PC-9 (cell line): ENCODE measurements at regions of chr7 and their contacts with region 1.

Region 1: DNA sequence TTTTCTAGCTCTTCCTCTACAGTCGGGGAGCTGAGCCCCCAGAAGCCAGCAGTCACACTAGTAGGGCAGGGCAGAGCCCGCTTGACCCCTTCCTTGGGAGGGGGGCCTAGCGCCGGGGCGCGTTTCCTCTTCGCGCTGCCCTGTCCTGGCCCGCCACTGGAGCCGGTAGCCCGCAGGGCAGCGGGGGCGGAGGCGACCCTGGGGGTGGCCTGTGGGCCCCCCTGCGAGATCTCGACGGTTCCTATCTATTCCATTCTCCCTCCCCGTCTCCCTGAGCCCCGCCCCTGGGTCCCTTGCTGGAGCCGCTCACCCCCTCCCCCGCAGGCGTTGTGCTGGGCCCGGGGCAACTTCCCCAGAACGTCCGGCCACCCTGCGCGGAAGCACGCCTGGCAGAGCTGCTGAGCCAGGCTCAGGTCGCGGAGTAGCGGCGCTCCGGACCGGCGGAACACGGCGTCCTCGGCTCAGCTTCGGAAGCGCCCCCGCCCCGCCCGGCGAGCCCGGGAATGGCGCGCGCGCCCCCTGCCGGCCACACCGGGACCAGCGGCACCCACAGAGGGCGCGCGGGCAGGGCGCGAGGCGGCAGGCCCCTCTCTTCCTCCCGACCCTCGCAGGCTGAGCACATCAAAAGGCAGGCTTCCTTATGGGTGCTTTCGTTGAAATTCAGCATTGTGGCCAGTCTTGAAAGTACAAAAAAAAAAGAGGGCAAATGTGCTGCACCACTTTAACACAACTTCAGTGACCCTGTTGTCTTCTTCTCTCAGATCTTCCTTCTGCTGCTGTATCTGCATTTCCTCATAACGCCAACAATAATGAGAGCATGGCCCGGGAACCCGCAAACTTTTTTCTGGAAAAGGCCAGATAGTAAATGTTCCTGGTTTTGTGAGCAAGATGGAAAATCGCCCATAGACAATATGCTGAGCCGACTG is 327.6 kb downstream of the TNS3 start:
- DNase-seq: peak; percentile 52 to 79
- H3K4me3 ChIP-seq: peak overlapping the region; percentile 63
- H3K27ac ChIP-seq: no peak overlapping the region
- H3K4me1 ChIP-seq: peaks cover 19% of the 10 kb centered on the region
- H3K27me3 ChIP-seq: no peaks in the 10 kb centered on the region
- CTCF ChIP-seq: peak; percentile 89

Region 2: DNA sequence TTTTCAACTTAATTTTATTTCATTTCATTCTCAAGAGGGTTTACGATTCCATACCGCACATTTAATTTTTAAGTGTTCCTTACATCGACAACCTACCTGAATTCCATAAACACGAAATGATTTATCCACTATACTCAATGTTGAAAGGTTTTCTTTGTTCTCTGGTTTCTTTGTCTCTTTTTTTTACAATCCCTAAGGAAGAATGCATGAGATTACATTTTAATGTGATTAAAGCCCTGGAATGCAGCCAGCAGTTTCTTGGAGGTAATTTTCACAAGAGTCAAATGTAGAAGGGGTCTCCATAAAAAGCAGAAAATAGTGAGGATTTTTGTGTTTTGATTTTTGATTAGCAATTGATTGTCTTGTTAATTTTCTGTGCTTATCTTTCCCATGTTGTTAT is 1739.4 kb before region 1 on chr7:
- CTCF ChIA-PET with region 1: no interaction called
- POLR2A ChIA-PET with region 1: no interaction called
- intact Hi-C with region 1: no loop called
- DNase-seq: no peak
- H3K4me3 ChIP-seq: no peak overlapping the region
- H3K27ac ChIP-seq: no peak overlapping the region
- H3K4me1 ChIP-seq: peaks cover 11% of the 10 kb centered on the region
- H3K27me3 ChIP-seq: peaks cover 19% of the 10 kb centered on the region; the same call in 1 of the 2 replicates
- CTCF ChIP-seq: no peak

Region 3: GRCh38 chr7:45890902-45891461 is 1363.4 kb before region 1 on chr7:
- CTCF ChIA-PET with region 1: no interaction called
- POLR2A ChIA-PET with region 1: no interaction called
- intact Hi-C with region 1: loop called (anchors 5 kb)
- DNase-seq: peak in 1 of 2 experiments; percentile 50
- H3K4me3 ChIP-seq: no peak overlapping the region
- H3K27ac ChIP-seq: no peak overlapping the region
- H3K4me1 ChIP-seq: peaks cover 30% of the 10 kb centered on the region
- H3K27me3 ChIP-seq: no peaks in the 10 kb centered on the region
- CTCF ChIP-seq: peak; percentile 98

Region 4: DNA sequence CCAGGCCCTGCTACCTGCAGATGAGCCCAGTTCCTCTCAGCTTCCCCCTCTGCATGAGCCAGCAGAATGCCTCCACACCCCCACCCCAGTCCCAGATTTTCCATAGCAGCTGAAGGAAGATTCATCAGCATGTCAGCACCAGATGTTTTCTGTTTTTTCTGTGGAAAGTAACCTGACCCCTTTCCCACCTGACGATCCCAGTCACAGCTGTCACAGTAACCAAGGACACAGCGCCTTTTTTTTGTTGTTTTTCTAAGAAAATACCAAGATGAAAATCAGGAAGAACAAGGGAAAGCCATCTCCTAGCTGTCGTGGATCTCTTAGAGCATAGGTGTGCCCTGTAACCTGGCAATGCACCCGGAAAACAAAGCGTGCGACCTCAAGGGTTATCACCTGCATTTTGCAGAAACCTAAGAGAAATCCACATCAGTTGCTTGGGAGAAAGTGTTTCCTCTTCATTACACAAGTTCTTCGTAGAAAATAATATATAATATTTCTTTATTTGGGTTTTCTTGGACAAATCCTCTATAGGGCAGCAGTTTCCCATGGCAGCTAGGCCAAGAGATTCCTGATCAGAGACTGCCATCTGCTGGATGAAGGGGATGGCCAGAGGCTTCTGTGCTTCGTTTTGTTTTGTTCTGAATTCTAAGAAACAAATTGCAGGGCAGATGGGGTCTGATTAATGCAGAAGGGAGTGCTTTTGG is 74.4 kb before region 1 on chr7:
- CTCF ChIA-PET with region 1: no interaction called
- POLR2A ChIA-PET with region 1: no interaction called
- intact Hi-C with region 1: loop called (anchors 5 kb)
- DNase-seq: peak; percentile 44 to 75
- H3K4me3 ChIP-seq: no peak overlapping the region
- H3K27ac ChIP-seq: no peak overlapping the region
- H3K4me1 ChIP-seq: no peaks in the 10 kb centered on the region
- H3K27me3 ChIP-seq: peaks cover 8% of the 10 kb centered on the region; the same call in 1 of the 2 replicates
- CTCF ChIP-seq: peak; percentile 97

Region 5: DNA sequence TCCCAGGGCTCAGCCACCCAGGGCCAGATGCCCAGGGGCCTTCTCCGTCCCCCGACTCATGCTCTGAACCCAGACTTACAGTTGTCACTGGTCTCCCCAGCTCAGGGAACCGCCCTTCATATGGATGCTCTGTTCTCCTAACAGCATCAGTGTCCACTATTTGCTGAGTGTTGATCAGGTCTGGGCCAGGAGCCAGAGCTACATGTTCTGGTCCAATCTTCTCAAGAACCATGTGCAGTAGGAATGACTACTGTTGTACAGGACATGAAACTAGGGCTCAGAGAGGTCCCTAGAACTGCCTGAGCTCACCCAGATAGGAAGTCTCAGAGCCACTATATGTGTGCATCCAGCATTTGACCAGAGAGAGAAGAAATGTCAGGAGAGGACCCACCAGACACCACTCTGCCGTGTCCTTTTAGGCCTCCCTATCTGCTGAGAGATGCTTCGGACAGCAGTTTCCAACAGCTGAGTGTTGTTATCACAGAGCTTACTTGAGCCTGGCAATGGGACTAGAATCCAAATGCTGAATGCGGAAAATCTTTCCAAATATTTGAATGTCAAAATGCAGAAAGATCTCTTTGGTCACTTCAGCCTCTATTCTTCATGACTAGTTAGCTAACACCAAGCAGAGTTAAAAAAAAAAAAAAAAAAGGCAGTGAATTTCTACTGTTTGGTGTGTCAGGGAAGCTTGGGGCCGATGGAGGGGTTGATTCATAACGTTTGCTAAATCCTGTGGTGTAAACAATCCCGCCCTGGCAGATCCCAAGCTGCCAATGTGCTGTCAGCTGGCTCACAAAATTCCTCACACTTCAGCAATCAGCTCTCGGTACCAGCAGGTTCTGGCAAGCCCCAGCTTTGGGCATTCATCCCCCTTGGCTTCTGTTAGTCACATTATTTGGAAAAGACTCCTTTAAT is 81.5 kb after region 1 on chr7:
- CTCF ChIA-PET with region 1: no interaction called
- POLR2A ChIA-PET with region 1: interaction called, 17 read pairs
- intact Hi-C with region 1: no loop called
- DNase-seq: no peak
- H3K4me3 ChIP-seq: no peak overlapping the region
- H3K27ac ChIP-seq: no peak overlapping the region
- H3K4me1 ChIP-seq: no peaks in the 10 kb centered on the region
- H3K27me3 ChIP-seq: no peaks in the 10 kb centered on the region
- CTCF ChIP-seq: no peak